AG04450 (cell line): ENCODE measurements at regions of chr12 and their contacts with region 1.

Region 1: DNA sequence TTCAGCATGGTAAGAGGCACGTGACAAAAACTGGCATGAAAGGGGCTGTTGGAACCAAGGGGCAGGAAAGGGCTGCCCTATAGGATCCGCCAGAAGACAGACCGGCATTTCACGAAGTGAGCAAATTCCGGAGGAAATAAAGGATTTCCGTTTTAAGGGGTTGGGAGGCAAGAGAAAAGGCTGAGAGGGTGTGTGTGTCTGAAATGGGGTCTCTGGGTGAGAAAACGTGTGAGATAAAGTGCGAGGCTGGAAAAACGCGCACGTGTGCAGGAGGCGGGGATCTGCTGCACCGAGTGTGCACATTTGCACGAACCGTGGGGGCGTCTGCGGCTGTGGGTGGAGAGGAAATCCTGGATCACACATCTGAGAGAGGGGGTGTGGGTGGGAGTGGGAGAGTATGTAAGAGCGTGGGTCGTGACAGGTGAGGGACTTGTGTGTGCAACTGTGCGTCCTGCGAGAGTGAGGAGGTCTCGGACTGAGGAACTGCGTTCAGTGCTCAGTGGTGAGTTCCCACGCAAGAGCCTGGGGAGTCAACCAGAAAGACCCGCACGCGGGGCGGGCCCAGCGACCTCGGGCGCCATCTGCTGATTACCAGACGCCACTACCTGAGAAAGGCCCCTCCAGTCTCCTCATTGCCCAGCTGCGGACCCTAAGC is 37.0 kb upstream of the P2RX7 start:
- DNase-seq: peak; percentile 10
- H3K4me3 ChIP-seq: peak overlapping the region; percentile 49
- H3K27ac ChIP-seq: no peak overlapping the region
- H3K27me3 ChIP-seq: peaks cover 3% of the 10 kb centered on the region
- CTCF ChIP-seq: peak; percentile 83

Region 2: GRCh38 chr12:121017966-121018491 is 77.6 kb before region 1 on chr12:
- CTCF ChIA-PET with region 1: no interaction called
- POLR2A ChIA-PET with region 1: interaction called, 14 read pairs
- DNase-seq: no peak
- H3K4me3 ChIP-seq: no peak overlapping the region
- H3K27ac ChIP-seq: no peak overlapping the region
- H3K27me3 ChIP-seq: peaks cover 6% of the 10 kb centered on the region
- CTCF ChIP-seq: no peak